ENCODE measurements at regions of chr19 and their contacts with region 1.

Region 1: DNA sequence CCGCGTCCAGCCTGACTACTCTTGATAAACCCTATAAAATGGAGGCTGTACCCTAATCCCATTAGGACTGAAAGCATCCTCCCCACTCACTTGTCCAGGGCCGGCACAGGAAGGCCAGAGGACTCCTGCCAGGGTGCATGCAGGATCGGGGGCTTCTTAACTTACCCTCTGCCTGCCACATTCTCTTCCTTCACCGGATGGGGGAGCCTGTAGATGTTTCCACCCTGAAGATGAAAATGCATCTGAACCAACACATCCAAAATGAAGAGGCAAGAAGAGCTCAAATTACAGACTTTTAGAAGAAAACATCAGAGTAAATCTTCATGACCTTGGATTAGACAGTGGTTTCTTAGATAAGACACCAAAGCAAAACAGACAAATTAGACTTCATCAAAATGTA is 25.9 kb upstream of the NAPA start:
- DNase-seq: peak in 1 of 2 donors; percentile 53
- ATAC-seq: no peak
- H3K4me3 ChIP-seq: no peak overlapping the region
- H3K4me3 Mint-ChIP-seq: peak overlapping the region; percentile 86
- H3K27ac ChIP-seq: peak overlapping the region; percentile 68
- H3K27ac Mint-ChIP-seq: peak overlapping the region; percentile 91 to 93
- H3K4me1 ChIP-seq: peaks cover 63% of the 10 kb centered on the region
- H3K4me1 Mint-ChIP-seq: peaks cover 39 to 40% of the 10 kb centered on the region in 2 donors
- H3K27me3 ChIP-seq: peaks cover 10% of the 10 kb centered on the region
- H3K27me3 Mint-ChIP-seq: peaks cover 0 to 5% of the 10 kb centered on the region in 2 donors
- CTCF ChIP-seq: no peak

Region 2: DNA sequence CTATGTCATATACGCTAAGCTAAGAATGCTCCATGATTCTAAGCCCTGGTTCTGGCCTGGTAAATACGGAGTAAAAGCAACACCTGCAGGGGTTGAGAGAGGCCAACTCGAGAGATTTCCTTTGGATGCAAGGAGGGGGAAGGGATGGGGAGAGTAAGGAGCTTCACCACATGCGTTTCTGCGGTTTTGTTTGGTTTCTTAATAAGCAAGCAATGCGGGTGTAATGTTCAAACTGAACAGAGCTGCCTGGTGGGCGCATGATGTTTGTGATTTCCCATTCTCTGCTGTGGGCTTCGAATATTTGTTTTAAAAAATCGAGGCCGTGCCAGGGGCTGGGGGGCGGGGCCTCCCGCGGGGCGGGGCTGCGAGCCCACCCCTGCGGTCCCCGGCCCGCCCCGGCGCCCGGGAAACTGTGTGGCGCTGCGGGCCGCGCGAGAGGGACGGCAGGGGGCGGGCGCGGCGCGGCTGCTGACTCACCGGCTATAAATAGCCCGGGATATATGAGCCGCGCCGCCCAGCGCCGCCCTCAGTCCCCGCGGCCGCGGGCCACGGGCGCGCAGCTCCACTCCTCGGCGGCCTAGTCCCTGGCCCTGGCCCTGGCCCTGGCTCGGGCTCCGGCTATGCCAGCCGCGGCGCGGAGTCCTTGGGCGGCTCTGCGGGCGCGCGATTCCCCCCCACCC is 314.8 kb before region 1 on chr19:
- intact Hi-C with region 1: no loop called
- DNase-seq: peak; percentile 94 to 95
- ATAC-seq: peak; percentile 43 to 76 (median 66)
- H3K4me3 ChIP-seq: peak overlapping the region; percentile 47
- H3K4me3 Mint-ChIP-seq: peak overlapping the region; percentile 79
- H3K27ac ChIP-seq: peak overlapping the region; percentile 96
- H3K27ac Mint-ChIP-seq: no peak overlapping the region
- H3K4me1 ChIP-seq: peaks cover 45% of the 10 kb centered on the region
- H3K4me1 Mint-ChIP-seq: peaks cover 6 to 18% of the 10 kb centered on the region in 2 donors
- H3K27me3 ChIP-seq: no peaks in the 10 kb centered on the region
- H3K27me3 Mint-ChIP-seq: no peaks in the 10 kb centered on the region
- CTCF ChIP-seq: peak; percentile 26

Region 3: GRCh38 chr19:47497050-47497766 is 43.5 kb before region 1 on chr19:
- intact Hi-C with region 1: no loop called
- DNase-seq: no peak
- ATAC-seq: no peak
- H3K4me3 ChIP-seq: no peak overlapping the region
- H3K4me3 Mint-ChIP-seq: no peak overlapping the region
- H3K27ac ChIP-seq: no peak overlapping the region
- H3K27ac Mint-ChIP-seq: peak overlapping the region; percentile 16 to 32
- H3K4me1 ChIP-seq: peaks cover 35% of the 10 kb centered on the region
- H3K4me1 Mint-ChIP-seq: peaks cover 15 to 24% of the 10 kb centered on the region in 2 donors
- H3K27me3 ChIP-seq: no peaks in the 10 kb centered on the region
- H3K27me3 Mint-ChIP-seq: no peaks in the 10 kb centered on the region
- CTCF ChIP-seq: no peak

Region 4: DNA sequence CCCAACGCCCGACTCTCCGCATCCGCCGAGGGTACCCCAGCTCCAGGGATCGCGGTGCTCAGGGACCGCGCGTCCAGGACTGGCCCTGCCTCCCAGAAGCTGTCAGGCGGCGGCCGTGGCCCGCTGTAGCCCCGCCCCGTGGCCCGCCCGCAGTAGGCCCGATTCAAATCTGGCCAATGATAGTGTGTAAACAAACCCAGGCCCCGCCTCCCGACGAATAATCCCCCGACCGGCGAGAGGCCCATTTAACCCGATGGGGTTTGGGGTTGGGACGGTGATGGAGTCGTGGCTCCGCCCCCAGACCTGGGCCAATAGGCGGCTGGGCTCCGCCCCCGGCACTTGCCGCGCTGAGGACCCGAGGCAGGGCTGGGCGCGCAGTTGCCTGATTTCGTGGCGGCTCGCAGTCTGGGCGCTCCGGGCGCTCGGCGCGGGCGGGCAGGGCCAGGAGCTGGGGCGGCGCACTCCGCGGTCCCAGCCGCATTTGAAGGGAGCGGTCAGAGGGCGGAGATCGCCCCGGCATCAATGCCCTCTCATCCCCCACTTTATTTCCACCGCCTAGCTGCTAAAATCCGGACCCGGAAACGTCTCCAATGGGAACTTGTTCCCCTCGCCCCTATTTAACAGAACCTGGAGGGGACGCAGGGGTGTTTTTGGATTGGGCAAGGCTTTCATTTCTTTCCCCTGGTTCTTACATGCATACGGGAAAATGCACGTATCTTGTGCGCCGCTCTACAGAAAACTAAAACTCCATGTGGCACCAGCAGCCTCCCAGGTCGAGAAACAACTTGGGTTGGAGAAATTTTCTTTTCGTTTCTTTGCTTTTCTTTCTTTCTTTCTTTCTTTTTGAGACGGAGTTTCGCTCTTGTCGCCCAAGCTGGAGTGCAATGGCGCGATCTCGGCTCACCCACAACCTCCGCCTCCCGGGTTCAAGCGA is 59.8 kb after region 1 on chr19:
- intact Hi-C with region 1: loop called (anchors 2 kb)
- DNase-seq: peak; percentile 96 to 100
- ATAC-seq: peak; percentile 95 to 98 (median 95)
- H3K4me3 ChIP-seq: peak overlapping the region; percentile 54
- H3K4me3 Mint-ChIP-seq: peak overlapping the region; percentile 93
- H3K27ac ChIP-seq: peak overlapping the region; percentile 75
- H3K27ac Mint-ChIP-seq: peak overlapping the region; percentile 92 to 94
- H3K4me1 ChIP-seq: peaks cover 41% of the 10 kb centered on the region
- H3K4me1 Mint-ChIP-seq: peaks cover 30 to 34% of the 10 kb centered on the region in 2 donors
- H3K27me3 ChIP-seq: no peaks in the 10 kb centered on the region
- H3K27me3 Mint-ChIP-seq: no peaks in the 10 kb centered on the region
- CTCF ChIP-seq: no peak

Region 5: DNA sequence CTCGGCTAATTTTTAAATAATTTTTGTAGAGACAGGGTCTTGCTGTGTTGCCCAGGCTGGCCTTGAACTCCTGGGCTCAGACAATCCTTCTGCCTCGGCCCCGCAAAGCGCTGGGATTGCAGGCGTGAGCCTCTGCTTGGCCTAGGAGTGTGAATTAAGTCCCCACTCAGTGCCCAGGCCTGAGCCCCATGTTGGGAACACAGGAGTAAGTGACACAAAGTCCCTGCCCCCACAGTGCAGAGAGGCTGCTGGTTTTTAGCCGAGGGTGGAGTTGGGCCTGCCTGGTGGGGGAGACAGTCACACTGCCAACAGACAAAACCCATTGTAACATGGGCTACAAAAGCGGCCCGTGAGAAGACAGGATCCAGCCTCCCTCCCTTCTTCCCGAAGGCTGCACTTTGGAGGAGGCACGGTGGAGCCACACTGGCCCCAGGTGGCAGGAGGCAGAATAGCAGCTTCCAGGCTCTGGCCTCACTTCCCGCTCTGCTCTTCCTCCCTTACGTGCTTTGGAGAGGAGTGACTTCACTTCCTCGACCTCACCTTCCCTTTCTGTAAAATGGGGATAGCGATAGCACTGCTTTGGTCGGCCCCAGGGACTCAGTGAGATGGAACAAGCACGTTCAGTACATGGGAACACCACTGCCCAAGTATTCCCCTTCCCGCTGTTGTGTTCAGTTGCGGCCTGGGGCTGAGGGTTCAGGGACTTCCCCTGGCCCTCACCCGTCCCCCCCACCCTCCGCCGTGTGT is 157.3 kb after region 1 on chr19:
- intact Hi-C with region 1: loop called (anchors 10 kb)
- DNase-seq: peak; percentile 43 to 76
- ATAC-seq: peak; percentile 63 to 86 (median 78)
- H3K4me3 ChIP-seq: no peak overlapping the region
- H3K4me3 Mint-ChIP-seq: no peak overlapping the region
- H3K27ac ChIP-seq: no peak overlapping the region
- H3K27ac Mint-ChIP-seq: no peak overlapping the region
- H3K4me1 ChIP-seq: no peaks in the 10 kb centered on the region
- H3K4me1 Mint-ChIP-seq: peaks cover 0 to 6% of the 10 kb centered on the region in 2 donors
- H3K27me3 ChIP-seq: no peaks in the 10 kb centered on the region
- H3K27me3 Mint-ChIP-seq: no peaks in the 10 kb centered on the region
- CTCF ChIP-seq: peak; percentile 74

Measured in natural killer cell (primary cell).